Prostate gland (tissue), 2 donors: ENCODE measurements at regions of chr3 and their contacts with region 1.

Region 1: DNA sequence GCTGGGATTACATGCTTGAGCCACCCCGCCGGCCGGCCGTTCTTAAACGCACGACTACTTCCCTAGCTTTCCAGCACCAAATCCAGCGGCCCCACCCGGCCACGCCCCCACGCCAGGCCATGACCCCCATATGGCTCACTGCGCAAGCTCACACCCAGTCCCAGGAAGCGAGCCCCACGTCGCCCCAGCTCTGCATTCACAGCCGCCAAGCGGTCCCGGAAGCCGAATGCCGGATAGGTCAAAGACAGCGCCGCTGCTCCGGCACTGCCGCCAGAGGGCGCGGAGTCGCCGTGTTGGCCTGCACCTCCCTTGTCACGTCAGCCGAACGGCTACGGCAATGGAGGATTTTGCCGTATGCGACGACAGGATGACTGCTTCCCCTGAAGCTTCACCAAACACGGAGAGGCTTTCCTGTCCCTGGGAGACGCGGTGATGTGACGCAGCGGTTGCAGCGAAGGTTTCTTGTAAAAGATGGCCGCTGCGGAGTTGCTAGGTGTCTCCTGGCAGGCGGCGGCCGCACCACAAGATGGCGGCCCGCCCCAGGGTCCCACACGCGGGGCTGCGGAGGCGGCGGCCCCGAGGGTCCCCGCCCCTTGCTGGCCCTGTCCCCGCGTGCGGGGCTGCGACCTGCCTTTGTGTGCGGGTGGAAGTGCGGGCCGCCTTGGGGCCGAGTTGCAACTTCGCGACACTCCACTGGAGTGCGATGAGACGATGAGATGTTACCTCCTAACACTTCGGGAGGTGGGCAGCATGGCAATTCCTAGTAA is 30.2 kb upstream of the RPN1 start:
- DNase-seq: peak; percentile 96
- H3K4me3 ChIP-seq: peak overlapping the region; percentile 48 to 52
- H3K27ac ChIP-seq: peak overlapping the region; percentile 90 to 93
- H3K4me1 ChIP-seq: no peaks in the 10 kb centered on the region
- H3K27me3 ChIP-seq: no peaks in the 10 kb centered on the region
- CTCF ChIP-seq: peak; percentile 94 to 100 (median 98)
- POLR2A ChIP-seq: peak; percentile 62

Region 2: GRCh38 chr3:128559486-128560225 is 121.1 kb before region 1 on chr3:
- intact Hi-C with region 1: no loop called
- DNase-seq: no peak
- H3K4me3 ChIP-seq: no peak overlapping the region
- H3K27ac ChIP-seq: no peak overlapping the region
- H3K4me1 ChIP-seq: no peaks in the 10 kb centered on the region
- H3K27me3 ChIP-seq: no peaks in the 10 kb centered on the region
- CTCF ChIP-seq: no peak
- POLR2A ChIP-seq: no peak

Region 3: DNA sequence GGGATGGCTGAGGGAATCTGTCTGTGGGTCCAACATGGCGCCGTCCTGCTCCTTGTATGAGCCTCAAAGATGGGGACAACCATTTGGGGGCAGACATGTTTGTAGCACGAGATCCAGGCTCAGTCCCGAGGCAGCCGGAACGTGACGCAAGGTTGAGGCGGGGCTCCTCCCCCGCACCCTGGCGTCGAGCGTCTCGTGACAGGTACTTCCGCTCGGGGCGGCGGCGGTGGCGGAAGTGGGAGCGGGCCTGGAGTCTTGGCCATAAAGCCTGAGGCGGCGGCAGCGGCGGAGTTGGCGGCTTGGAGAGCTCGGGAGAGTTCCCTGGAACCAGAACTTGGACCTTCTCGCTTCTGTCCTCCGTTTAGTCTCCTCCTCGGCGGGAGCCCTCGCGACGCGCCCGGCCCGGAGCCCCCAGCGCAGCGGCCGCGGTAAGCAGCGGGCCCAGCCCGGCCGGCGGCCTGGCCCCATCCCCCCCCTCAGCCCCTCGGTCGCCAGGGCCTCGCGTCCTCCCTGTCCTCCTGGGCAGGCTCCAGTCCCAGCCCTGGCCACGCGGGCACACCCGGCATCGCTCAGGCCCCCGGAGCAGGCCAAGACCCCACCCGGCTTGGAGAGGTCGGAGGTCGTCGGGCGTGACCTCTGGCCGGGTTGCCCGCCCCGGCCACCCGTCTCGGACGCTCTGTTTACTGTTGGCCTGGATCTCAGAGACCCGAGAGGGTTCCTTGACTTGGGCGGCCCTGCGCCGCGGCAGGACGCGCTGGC is 45.3 kb after region 1 on chr3 and contains the start of gene RAB7A:
- intact Hi-C with region 1: loop called (anchors 5 kb)
- DNase-seq: peak; percentile 98
- H3K4me3 ChIP-seq: peak within 1 kb of the TSS; percentile 99 to 100
- H3K27ac ChIP-seq: peak within 1 kb of the TSS; percentile 97
- H3K4me1 ChIP-seq: peaks cover 2% of the 10 kb centered on the region
- H3K27me3 ChIP-seq: no peaks in the 10 kb centered on the region
- CTCF ChIP-seq: peak in 3 of 4 experiments; percentile 10 to 27 (median 18)
- POLR2A ChIP-seq: peak; percentile 96
- total RNA-seq, gene RAB7A: 88.2 to 125 TPM

Region 4: DNA sequence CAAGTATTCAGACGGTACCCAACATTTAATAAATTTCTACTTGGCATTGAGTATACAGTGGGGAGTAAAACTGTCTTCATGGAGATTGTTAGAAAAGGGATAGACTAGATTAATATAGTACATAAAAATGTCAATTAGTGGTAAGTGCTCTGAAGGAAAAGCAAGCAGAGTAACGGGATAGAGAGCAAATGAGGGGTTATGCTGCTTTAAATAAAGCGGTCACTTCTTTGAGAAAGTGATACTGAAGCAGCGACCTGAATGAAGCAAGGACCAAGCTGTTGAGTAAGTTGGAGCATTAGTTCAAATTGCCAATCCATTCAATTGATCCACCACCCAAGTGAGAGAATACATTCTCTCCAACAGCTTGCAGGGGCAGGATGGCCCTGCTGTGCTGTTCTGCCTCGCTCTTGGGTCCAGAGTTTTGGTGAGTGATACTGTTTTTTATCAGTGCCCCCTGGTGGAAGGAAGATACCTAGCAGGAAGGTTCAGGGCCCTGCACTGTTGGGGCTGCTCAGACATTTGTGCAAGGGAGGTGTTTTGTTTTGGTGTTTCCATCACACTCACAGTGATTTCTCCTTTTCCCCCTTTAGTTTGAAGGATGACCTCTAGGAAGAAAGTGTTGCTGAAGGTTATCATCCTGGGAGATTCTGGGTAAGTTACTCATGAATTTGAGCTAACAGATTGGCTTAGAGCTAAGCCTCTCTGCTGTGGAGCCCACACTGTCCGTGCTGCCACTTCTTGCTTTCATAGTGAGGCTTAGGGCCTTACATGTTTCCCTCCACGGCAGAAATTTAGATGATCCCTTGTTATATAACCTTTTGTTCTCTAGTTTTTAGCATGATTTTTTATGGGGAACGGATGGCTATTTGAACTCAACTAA is 114.2 kb after region 1 on chr3:
- intact Hi-C with region 1: loop called (anchors 2 kb)
- DNase-seq: peak; percentile 63
- H3K4me3 ChIP-seq: no peak overlapping the region
- H3K27ac ChIP-seq: peak overlapping the region in 1 of 2 donors; percentile 1
- H3K4me1 ChIP-seq: no peaks in the 10 kb centered on the region
- H3K27me3 ChIP-seq: no peaks in the 10 kb centered on the region
- CTCF ChIP-seq: peak; percentile 53 to 87 (median 84)
- POLR2A ChIP-seq: no peak

Region 5: GRCh38 chr3:128845778-128846485 is 165.1 kb after region 1 on chr3:
- intact Hi-C with region 1: loop called (anchors 5 kb)
- DNase-seq: peak; percentile 39
- H3K4me3 ChIP-seq: peak overlapping the region; percentile 22 to 33
- H3K27ac ChIP-seq: peak overlapping the region in 1 of 2 donors; percentile 21
- H3K4me1 ChIP-seq: no peaks in the 10 kb centered on the region
- H3K27me3 ChIP-seq: no peaks in the 10 kb centered on the region
- CTCF ChIP-seq: peak in 3 of 4 experiments; percentile 32 to 60 (median 51)
- POLR2A ChIP-seq: no peak